Psoas muscle (tissue), 8 donors: ENCODE measurements at regions of chr18 and their contacts with region 1.

Region 1: DNA sequence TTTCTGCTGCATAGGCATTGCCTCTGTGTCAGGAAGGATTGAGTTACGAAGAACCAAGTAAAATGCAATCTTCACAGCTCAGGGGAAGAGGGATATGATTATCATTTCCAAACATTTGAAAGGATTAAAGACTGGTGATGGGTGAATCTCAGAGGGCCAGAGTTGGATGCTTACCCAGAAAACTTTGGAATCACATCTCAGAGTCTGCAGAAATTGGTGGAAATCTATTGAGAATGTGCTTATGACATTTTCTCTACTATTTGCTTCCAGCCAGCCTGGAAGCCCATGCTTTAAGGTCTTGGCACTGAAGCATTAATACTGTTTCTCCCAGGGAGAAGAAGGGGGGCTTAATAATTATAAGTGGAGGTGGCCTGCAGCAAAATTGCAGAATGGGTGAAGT is 1301.4 kb upstream of the PIK3C3 start:
- DNase-seq: no peak
- ATAC-seq: no peak
- H3K4me3 ChIP-seq: no peak overlapping the region
- H3K27ac ChIP-seq: no peak overlapping the region
- H3K4me1 ChIP-seq: no peaks in the 10 kb centered on the region
- H3K27me3 ChIP-seq: no peaks in the 10 kb centered on the region
- CTCF ChIP-seq: no peak

Region 2: GRCh38 chr18:40631319-40631718 is 22.4 kb before region 1 on chr18:
- intact Hi-C with region 1: loop called in 1 of 2 experiments (anchors 2 kb)
- DNase-seq: no peak
- ATAC-seq: no peak
- H3K4me3 ChIP-seq: no peak overlapping the region
- H3K27ac ChIP-seq: no peak overlapping the region
- H3K4me1 ChIP-seq: no peaks in the 10 kb centered on the region
- H3K27me3 ChIP-seq: no peaks in the 10 kb centered on the region
- CTCF ChIP-seq: no peak